HCT116 (cell line): ENCODE measurements at regions of chr9 and their contacts with region 1.

Region 1: GRCh38 chr9:27407986-27408385 is 111.0 kb upstream of the EQTN start:
- DNase-seq: no peak
- ATAC-seq: no peak
- H3K4me3 ChIP-seq: no peak overlapping the region
- H3K27ac ChIP-seq: no peak overlapping the region
- H3K4me1 ChIP-seq: no peaks in the 10 kb centered on the region
- H3K27me3 ChIP-seq: peaks cover 16% of the 10 kb centered on the region
- CTCF ChIP-seq: no peak
- POLR2A ChIP-seq: no peak
- RAD21 ChIP-seq: no peak

Region 2: DNA sequence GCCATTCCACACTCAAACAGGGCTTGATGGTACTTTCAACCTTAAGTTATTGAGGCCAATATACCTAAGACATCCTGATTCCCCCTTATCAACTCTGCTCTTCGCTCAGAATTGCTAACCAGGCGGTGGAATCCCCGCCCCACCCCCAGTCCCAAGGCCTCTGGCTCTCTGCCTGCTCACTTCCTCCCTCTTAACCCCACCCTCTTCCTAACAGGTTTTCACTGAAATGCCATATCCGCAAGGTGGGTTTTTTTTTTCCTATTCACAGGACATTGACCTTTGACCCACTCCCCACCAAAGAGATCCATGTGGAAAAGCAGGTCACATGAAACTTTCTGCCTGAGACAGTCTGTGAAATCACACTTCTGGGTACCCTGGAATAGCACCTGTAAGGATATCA is 49.5 kb after region 1 on chr9:
- CTCF ChIA-PET with region 1: no interaction called
- POLR2A ChIA-PET with region 1: no interaction called
- RAD21 ChIA-PET with region 1: no interaction called
- intact Hi-C with region 1: loop called (anchors 5 kb)
- DNase-seq: no peak
- ATAC-seq: no peak
- H3K4me3 ChIP-seq: no peak overlapping the region
- H3K27ac ChIP-seq: no peak overlapping the region
- H3K4me1 ChIP-seq: no peaks in the 10 kb centered on the region
- H3K27me3 ChIP-seq: no peaks in the 10 kb centered on the region; the same call in 1 of the 2 replicates
- CTCF ChIP-seq: no peak
- POLR2A ChIP-seq: no peak
- RAD21 ChIP-seq: no peak